Calu3 (cell line): ENCODE measurements at regions of chr3 and their contacts with region 1.

Region 1: DNA sequence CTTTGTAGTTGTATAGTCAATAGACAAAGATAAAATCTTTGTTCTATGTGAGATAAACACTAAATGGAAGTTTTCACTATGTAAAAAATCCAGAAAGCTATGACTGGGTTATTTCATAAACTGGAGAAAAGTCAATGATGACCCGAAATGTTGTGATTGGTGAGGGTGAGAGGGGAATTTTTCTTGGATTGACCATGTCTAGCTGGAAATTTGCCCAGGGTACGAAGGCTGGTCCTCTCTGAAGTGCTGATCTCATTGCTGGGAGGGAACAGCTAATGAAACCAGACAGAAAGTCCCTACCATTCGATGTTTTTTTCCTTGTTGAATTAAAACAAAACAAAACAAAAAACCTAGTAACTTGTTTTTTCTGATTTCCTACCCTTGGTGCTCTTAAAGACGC is 14.3 kb downstream of the TPRG1 start:
- DNase-seq: peak; percentile 75
- H3K4me3 Mint-ChIP-seq: no peak overlapping the region
- H3K27ac Mint-ChIP-seq: peak overlapping the region; percentile 87
- H3K4me1 Mint-ChIP-seq: peaks cover 52% of the 10 kb centered on the region
- H3K27me3 Mint-ChIP-seq: no peaks in the 10 kb centered on the region
- CTCF ChIP-seq: no peak

Region 2: DNA sequence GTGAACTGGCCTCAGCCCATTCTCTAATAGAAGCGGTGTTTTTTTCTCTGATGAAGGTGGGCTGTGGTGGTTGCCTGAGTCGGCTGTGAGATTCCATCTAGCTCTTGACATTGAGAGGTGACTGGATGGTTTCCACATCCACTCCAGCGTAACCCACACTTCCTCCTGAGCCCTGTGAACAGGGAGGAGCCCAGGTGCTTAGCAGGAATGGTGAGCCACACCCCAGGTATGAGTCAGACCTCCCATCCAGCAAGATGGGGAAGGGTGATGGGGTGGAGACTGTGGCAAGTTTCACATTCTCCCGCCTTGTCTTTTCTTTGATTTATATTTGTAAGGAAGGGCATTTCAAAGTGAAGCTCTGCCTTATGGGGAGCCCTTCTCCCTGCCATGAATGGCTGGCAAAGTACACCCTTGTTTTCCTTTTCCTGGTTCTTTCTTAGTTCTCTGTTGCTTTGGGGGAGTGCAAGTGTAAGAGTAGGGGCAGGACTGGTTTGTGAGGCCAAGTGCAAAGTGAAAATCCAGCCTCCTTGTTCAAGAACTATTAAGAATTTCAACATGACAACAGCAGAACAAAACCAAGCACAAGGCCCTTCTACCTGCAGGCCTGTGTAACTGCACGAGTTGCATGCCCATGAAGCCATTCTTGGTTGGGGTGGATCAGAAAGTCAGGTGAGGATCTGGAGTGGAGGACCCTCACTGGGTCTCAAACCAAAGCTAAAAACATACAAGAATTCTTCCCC is 18.9 kb before region 1 on chr3:
- CTCF ChIA-PET with region 1: interaction called, 4 read pairs
- intact Hi-C with region 1: loop called (anchors 2 kb)
- DNase-seq: peak; percentile 93
- H3K4me3 Mint-ChIP-seq: peak overlapping the region; percentile 13
- H3K27ac Mint-ChIP-seq: peak overlapping the region; percentile 50
- H3K4me1 Mint-ChIP-seq: peaks cover 41% of the 10 kb centered on the region
- H3K27me3 Mint-ChIP-seq: no peaks in the 10 kb centered on the region
- CTCF ChIP-seq: no peak

Region 3: GRCh38 chr3:189249987-189250386 is 63.9 kb after region 1 on chr3:
- CTCF ChIA-PET with region 1: no interaction called
- intact Hi-C with region 1: no loop called
- DNase-seq: no peak
- H3K4me3 Mint-ChIP-seq: no peak overlapping the region
- H3K27ac Mint-ChIP-seq: no peak overlapping the region
- H3K4me1 Mint-ChIP-seq: no peaks in the 10 kb centered on the region
- H3K27me3 Mint-ChIP-seq: no peaks in the 10 kb centered on the region
- CTCF ChIP-seq: no peak